Activated naive CD4-positive, alpha-beta T cell treated with anti-CD3 and anti-CD28 coated beads for 36 hours (primary cell): ENCODE measurements at regions of chr6 and their contacts with region 1.

Region 1: GRCh38 chr6:16836144-16836981 is 75.1 kb upstream of the ATXN1 start:
- DNase-seq: no peak
- H3K4me3 Mint-ChIP-seq: no peak overlapping the region
- H3K27ac Mint-ChIP-seq: no peak overlapping the region
- H3K4me1 Mint-ChIP-seq: peaks cover 24% of the 10 kb centered on the region
- H3K27me3 Mint-ChIP-seq: peaks cover 11% of the 10 kb centered on the region

Region 2: GRCh38 chr6:15473741-15474161 is 1362.6 kb before region 1 on chr6:
- CTCF ChIA-PET with region 1: no interaction called
- intact Hi-C with region 1: no loop called
- DNase-seq: no peak
- H3K4me3 Mint-ChIP-seq: no peak overlapping the region
- H3K27ac Mint-ChIP-seq: no peak overlapping the region
- H3K4me1 Mint-ChIP-seq: peaks cover 23% of the 10 kb centered on the region
- H3K27me3 Mint-ChIP-seq: no peaks in the 10 kb centered on the region

Region 3: GRCh38 chr6:16770701-16771569 is 65.4 kb before region 1 on chr6:
- CTCF ChIA-PET with region 1: no interaction called
- intact Hi-C with region 1: loop called (anchors 5 kb)
- DNase-seq: peak; percentile 82
- H3K4me3 Mint-ChIP-seq: no peak overlapping the region
- H3K27ac Mint-ChIP-seq: no peak overlapping the region
- H3K4me1 Mint-ChIP-seq: peaks cover 46% of the 10 kb centered on the region
- H3K27me3 Mint-ChIP-seq: no peaks in the 10 kb centered on the region

Region 4: DNA sequence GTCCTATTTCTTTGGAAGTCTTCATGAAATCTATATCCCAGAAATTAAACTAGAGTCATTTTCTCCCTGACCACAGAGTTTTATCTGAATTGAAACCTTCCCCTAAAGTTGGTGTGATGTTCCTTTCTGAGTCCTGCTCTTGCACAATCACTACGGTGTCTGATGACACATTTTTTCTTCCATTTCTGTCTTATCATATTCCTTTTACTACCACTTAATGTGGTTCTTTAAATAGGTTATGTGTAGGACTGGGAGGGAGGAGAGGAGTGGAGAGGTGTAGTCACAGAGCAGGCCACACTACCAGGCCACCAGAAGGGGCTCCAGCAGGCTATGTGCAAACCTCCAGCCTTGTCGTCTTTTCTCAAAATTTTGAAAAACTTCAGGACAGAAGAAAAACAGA is 35.4 kb before region 1 on chr6:
- CTCF ChIA-PET with region 1: no interaction called
- intact Hi-C with region 1: loop called (anchors 2 kb)
- DNase-seq: no peak
- H3K4me3 Mint-ChIP-seq: no peak overlapping the region
- H3K27ac Mint-ChIP-seq: no peak overlapping the region
- H3K4me1 Mint-ChIP-seq: peaks cover 5% of the 10 kb centered on the region
- H3K27me3 Mint-ChIP-seq: no peaks in the 10 kb centered on the region

Region 5: GRCh38 chr6:16851758-16852157 is 15.4 kb after region 1 on chr6:
- CTCF ChIA-PET with region 1: no interaction called
- intact Hi-C with region 1: loop called (anchors 1 kb)
- DNase-seq: no peak
- H3K4me3 Mint-ChIP-seq: no peak overlapping the region
- H3K27ac Mint-ChIP-seq: no peak overlapping the region
- H3K4me1 Mint-ChIP-seq: peaks cover 15% of the 10 kb centered on the region
- H3K27me3 Mint-ChIP-seq: peaks cover 24% of the 10 kb centered on the region

Region 6: DNA sequence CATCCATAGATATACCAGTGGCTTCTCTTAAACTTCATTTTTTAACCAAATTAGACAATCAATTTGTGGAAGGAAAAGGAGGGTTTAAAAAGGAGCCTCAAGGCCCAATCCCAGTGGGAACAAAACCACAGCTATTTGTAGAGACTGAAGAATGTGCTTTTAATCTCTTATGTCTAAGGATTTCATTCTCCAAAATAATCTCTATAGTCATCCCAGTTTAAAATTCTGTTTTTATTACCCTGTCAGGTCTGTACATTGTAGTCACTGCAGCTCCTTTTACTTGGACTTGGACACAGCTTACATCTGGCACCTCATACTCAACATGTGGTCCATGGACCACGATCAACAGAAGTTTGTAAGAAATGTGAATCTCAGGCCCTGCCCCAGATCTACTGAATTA is 113.4 kb after region 1 on chr6:
- CTCF ChIA-PET with region 1: no interaction called
- intact Hi-C with region 1: loop called (anchors 2 kb)
- DNase-seq: no peak
- H3K4me3 Mint-ChIP-seq: no peak overlapping the region
- H3K27ac Mint-ChIP-seq: no peak overlapping the region
- H3K4me1 Mint-ChIP-seq: peaks cover 16% of the 10 kb centered on the region
- H3K27me3 Mint-ChIP-seq: peaks cover 54% of the 10 kb centered on the region

Region 7: DNA sequence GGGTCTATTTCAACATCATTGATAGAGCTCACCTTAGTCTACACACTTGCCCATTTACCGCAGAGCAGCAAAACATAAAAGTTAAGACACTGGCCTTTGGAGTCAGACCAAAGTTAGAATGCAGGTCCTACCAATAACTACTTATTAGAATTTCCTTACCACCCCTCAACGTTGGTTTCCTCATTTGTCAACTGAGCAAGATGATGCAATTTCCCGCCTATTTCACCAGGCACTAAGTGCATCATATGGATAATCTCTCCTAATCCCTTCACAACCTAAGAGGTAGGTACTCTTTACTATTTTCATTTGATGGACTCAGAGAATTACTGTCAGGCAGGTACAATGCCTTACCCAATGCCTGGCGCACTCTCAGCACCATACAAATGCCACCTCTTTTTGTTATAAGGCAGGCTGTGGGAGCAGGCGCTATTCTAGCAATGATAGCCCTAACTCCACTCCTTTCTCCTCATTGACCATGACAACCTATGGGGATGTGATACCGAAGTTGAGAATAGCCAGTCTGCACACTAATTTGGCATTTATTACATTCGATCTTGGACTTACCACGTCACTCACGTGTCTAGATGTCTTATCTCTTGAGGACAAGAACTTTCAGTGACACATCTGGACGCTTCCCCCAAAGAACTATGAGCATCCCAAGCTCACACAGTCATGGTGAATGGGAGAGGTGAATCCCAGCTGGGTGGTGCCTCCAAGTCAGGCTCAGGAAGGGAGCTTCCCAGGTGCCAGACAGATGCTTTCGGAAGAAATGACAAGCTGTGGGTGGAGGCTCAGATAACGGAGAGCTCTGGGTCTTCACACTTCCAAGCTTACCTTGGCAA is 137.4 kb after region 1 on chr6:
- CTCF ChIA-PET with region 1: interaction called, 10 read pairs
- intact Hi-C with region 1: no loop called
- DNase-seq: no peak
- H3K4me3 Mint-ChIP-seq: no peak overlapping the region
- H3K27ac Mint-ChIP-seq: no peak overlapping the region
- H3K4me1 Mint-ChIP-seq: peaks cover 6% of the 10 kb centered on the region
- H3K27me3 Mint-ChIP-seq: peaks cover 32% of the 10 kb centered on the region